CD4-positive, alpha-beta T cell (primary cell): ENCODE measurements at regions of chrX and their contacts with region 1.

Region 1: DNA sequence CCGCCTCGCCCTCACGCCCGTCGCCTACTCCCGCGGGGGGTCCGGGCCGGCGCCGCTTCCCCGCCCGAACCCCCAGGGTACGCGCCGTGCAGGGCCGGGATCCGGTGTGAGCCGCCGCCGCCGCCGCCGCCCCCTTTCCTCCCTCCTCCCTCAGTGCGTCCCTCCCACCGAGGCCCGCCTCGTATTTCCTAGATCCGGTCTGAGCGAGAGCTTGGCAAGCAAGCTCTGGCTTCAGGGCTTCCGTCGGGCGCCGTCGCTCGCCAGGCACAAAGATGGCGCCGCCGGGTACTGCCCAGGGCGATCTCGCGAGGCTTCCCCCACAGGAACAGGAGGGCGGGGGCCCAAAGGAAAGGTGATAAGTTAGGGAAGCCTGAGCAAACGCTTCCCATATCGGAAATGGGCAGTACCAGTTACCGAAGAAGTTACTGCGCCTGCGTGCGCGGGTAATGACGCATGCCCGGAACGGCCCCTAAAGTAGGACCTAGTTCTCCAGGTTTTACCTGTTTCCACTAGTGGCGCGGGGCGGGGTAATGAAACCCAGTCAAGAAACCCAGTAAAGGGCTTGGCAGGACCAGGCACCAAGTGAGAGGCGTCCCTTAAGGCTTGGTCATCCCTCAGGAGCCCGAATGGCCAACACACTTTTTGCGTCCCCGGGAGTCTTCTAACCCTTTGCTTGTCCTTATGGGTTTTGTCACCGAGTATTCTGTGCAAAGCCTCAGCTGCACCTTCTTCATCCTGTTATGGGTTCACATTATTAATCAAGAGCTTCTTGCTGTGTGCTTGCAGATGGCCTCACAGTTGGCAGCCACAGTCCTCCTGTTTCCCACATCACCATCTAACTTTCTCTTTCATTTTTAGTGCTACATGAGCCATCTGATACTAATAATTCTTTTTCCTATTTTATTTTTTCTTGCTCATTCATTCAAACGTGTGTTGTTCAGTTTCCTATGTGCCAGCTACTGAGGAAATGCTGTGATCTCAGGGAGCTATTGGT is at the start of gene TAB3:
- DNase-seq: peak; percentile 84 to 97 (median 92)
- ATAC-seq: peak; percentile 90
- H3K4me3 ChIP-seq: peak within 1 kb of the TSS; percentile 72
- H3K4me3 Mint-ChIP-seq: peak within 1 kb of the TSS; percentile 93
- H3K27ac ChIP-seq: peak within 1 kb of the TSS; percentile 61 to 82
- H3K27ac Mint-ChIP-seq: peak within 1 kb of the TSS; percentile 96
- H3K4me1 ChIP-seq: peaks cover 16% of the 10 kb centered on the region
- H3K4me1 Mint-ChIP-seq: peaks cover 50% of the 10 kb centered on the region
- H3K27me3 ChIP-seq: no peaks in the 10 kb centered on the region
- H3K27me3 Mint-ChIP-seq: no peaks in the 10 kb centered on the region
- CTCF ChIP-seq: no peak
- total RNA-seq, gene TAB3: 24.7 to 25.6 TPM

Region 2: GRCh38 chrX:30652527-30653414 is 236.7 kb before region 1 on chrX:
- CTCF ChIA-PET with region 1: no interaction called
- POLR2A ChIA-PET with region 1: no interaction called
- intact Hi-C with region 1: loop called (anchors 5 to 10 kb)
- DNase-seq: peak; percentile 72 to 93 (median 86)
- ATAC-seq: peak; percentile 84
- H3K4me3 ChIP-seq: peak overlapping the region; percentile 89
- H3K4me3 Mint-ChIP-seq: peak overlapping the region; percentile 96
- H3K27ac ChIP-seq: peak overlapping the region; percentile 56 to 69
- H3K27ac Mint-ChIP-seq: peak overlapping the region; percentile 96
- H3K4me1 ChIP-seq: peaks cover 20% of the 10 kb centered on the region
- H3K4me1 Mint-ChIP-seq: peaks cover 45% of the 10 kb centered on the region
- H3K27me3 ChIP-seq: no peaks in the 10 kb centered on the region
- H3K27me3 Mint-ChIP-seq: no peaks in the 10 kb centered on the region
- CTCF ChIP-seq: no peak

Region 3: GRCh38 chrX:30659421-30659820 is 230.0 kb before region 1 on chrX:
- CTCF ChIA-PET with region 1: no interaction called
- POLR2A ChIA-PET with region 1: no interaction called
- intact Hi-C with region 1: loop called (anchors 5 to 10 kb)
- DNase-seq: peak in 3 of 14 experiments; percentile 24 to 58 (median 42)
- ATAC-seq: peak; percentile 49
- H3K4me3 ChIP-seq: no peak overlapping the region
- H3K4me3 Mint-ChIP-seq: no peak overlapping the region
- H3K27ac ChIP-seq: no peak overlapping the region
- H3K27ac Mint-ChIP-seq: peak overlapping the region; percentile 57
- H3K4me1 ChIP-seq: peaks cover 3% of the 10 kb centered on the region
- H3K4me1 Mint-ChIP-seq: peaks cover 24% of the 10 kb centered on the region
- H3K27me3 ChIP-seq: no peaks in the 10 kb centered on the region
- H3K27me3 Mint-ChIP-seq: no peaks in the 10 kb centered on the region
- CTCF ChIP-seq: no peak

Region 4: DNA sequence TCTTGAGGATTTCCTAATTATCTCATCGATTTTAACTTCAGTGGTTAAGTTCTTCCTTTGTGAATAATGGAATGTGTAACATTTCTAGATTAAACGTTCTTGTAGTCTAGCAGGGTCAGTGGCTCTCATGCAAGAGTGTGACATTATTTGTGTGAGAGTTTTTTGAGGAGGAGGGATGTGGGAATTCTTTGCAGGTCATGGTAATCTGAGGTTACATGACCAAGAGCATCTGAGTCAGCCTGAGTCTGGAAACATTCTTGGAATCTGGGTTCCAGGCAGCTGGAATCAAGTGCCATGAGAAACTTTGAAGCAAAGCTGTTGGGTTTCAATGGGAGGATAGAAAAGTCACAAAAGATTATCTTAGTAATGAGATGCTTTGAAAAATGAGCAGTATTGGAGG is 186.7 kb before region 1 on chrX:
- CTCF ChIA-PET with region 1: no interaction called
- POLR2A ChIA-PET with region 1: no interaction called
- intact Hi-C with region 1: no loop called
- DNase-seq: no peak
- ATAC-seq: no peak
- H3K4me3 ChIP-seq: no peak overlapping the region
- H3K4me3 Mint-ChIP-seq: no peak overlapping the region
- H3K27ac ChIP-seq: no peak overlapping the region
- H3K27ac Mint-ChIP-seq: no peak overlapping the region
- H3K4me1 ChIP-seq: no peaks in the 10 kb centered on the region
- H3K4me1 Mint-ChIP-seq: no peaks in the 10 kb centered on the region
- H3K27me3 ChIP-seq: no peaks in the 10 kb centered on the region
- H3K27me3 Mint-ChIP-seq: no peaks in the 10 kb centered on the region
- CTCF ChIP-seq: no peak

Region 5: GRCh38 chrX:30735839-30736238 is 153.6 kb before region 1 on chrX:
- CTCF ChIA-PET with region 1: interaction called, 3 read pairs
- POLR2A ChIA-PET with region 1: interaction called, 3 read pairs
- intact Hi-C with region 1: loop called (anchors 10 kb)
- DNase-seq: peak; percentile 44 to 77 (median 62)
- ATAC-seq: peak; percentile 86
- H3K4me3 ChIP-seq: no peak overlapping the region
- H3K4me3 Mint-ChIP-seq: no peak overlapping the region
- H3K27ac ChIP-seq: no peak overlapping the region
- H3K27ac Mint-ChIP-seq: no peak overlapping the region
- H3K4me1 ChIP-seq: no peaks in the 10 kb centered on the region
- H3K4me1 Mint-ChIP-seq: peaks cover 5% of the 10 kb centered on the region
- H3K27me3 ChIP-seq: no peaks in the 10 kb centered on the region
- H3K27me3 Mint-ChIP-seq: no peaks in the 10 kb centered on the region
- CTCF ChIP-seq: peak; percentile 60

Region 6: GRCh38 chrX:30822068-30822681 is 67.3 kb before region 1 on chrX:
- CTCF ChIA-PET with region 1: no interaction called
- POLR2A ChIA-PET with region 1: interaction called, 3 read pairs
- intact Hi-C with region 1: loop called in 1 of 2 experiments (anchors 5 kb)
- DNase-seq: peak in 1 of 14 experiments; percentile 2
- ATAC-seq: no peak
- H3K4me3 ChIP-seq: no peak overlapping the region
- H3K4me3 Mint-ChIP-seq: no peak overlapping the region
- H3K27ac ChIP-seq: no peak overlapping the region
- H3K27ac Mint-ChIP-seq: no peak overlapping the region
- H3K4me1 ChIP-seq: peaks cover 4% of the 10 kb centered on the region
- H3K4me1 Mint-ChIP-seq: peaks cover 26% of the 10 kb centered on the region
- H3K27me3 ChIP-seq: no peaks in the 10 kb centered on the region
- H3K27me3 Mint-ChIP-seq: no peaks in the 10 kb centered on the region
- CTCF ChIP-seq: no peak